ENCODE measurements at regions of chr6 and their contacts with region 1.

Region 1: GRCh38 chr6:82178077-82178758 is 69.3 kb downstream of the IBTK start:
- DNase-seq: peak; percentile 56
- H3K4me3 ChIP-seq: no peak overlapping the region
- H3K27ac ChIP-seq: no peak overlapping the region
- H3K4me1 ChIP-seq: no peaks in the 10 kb centered on the region
- H3K27me3 ChIP-seq: no peaks in the 10 kb centered on the region
- CTCF ChIP-seq: peak; percentile 19 to 26
- POLR2A ChIP-seq: no peak

Region 2: GRCh38 chr6:81241126-81242041 is 936.8 kb before region 1 on chr6:
- CTCF ChIA-PET with region 1: interaction called, 3 read pairs
- POLR2A ChIA-PET with region 1: no interaction called
- dilution Hi-C with region 1: no loop called
- intact Hi-C with region 1: loop called (anchors 5 kb)
- DNase-seq: peak; percentile 23
- H3K4me3 ChIP-seq: no peak overlapping the region
- H3K27ac ChIP-seq: no peak overlapping the region
- H3K4me1 ChIP-seq: no peaks in the 10 kb centered on the region
- H3K27me3 ChIP-seq: no peaks in the 10 kb centered on the region
- CTCF ChIP-seq: peak; percentile 24 to 29
- POLR2A ChIP-seq: no peak

Region 3: GRCh38 chr6:82076916-82077315 is 101.3 kb before region 1 on chr6:
- CTCF ChIA-PET with region 1: interaction called, 6 read pairs
- POLR2A ChIA-PET with region 1: no interaction called
- dilution Hi-C with region 1: no loop called
- intact Hi-C with region 1: loop called (anchors 5 kb)
- DNase-seq: peak; percentile 69
- H3K4me3 ChIP-seq: no peak overlapping the region
- H3K27ac ChIP-seq: no peak overlapping the region
- H3K4me1 ChIP-seq: peaks cover 9% of the 10 kb centered on the region
- H3K27me3 ChIP-seq: no peaks in the 10 kb centered on the region
- CTCF ChIP-seq: no peak
- POLR2A ChIP-seq: no peak

Measured in endothelial cell of umbilical vein (primary cell).